Activated CD4-positive, alpha-beta T cell treated with anti-CD3 and anti-CD28 coated beads, Interleukin-2, amount 10 ng/mL, durations not matched to agents 7 days and 5 days (primary cell): ENCODE measurements at regions of chr1 and their contacts with region 1.

Region 1: DNA sequence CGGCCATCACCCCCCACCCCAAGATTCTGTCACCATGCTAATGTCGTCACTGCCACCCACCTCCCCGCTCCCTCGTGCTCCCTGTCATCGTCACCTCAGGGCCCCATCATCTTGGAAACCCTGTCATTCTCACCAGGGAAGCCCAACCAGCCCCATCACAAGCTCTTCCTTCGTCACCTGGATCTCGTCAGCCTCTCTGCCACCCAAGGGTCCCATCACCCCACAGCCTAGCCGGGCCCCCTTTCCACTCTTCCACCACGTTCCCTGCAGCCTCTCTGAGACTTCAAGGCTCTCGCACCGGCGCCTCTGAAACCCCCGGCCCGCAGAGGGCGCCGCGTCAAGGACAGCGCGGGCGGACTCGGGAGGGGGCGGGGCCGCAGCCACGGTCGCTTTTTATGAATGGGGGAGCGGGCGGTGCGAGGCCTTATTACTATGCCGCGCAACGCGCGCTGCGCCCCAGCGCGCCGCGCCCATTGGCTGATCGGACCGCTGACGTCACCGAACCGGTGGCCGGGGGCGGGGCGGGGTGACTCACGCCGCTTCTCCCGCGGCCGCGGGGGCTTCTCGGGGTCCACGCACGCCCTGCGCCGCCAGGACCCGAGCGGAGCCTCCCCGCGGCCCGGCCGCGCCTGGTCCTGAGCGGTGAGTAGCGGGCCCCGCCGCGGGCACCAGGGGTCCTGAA is at the start of gene GPR3:
- DNase-seq: peak; percentile 94
- H3K4me3 Mint-ChIP-seq: peak within 1 kb of the TSS; percentile 64
- H3K27ac Mint-ChIP-seq: peak within 1 kb of the TSS; percentile 87
- H3K4me1 Mint-ChIP-seq: peaks cover 15% of the 10 kb centered on the region
- H3K27me3 Mint-ChIP-seq: peaks cover 8% of the 10 kb centered on the region
- total RNA-seq, gene GPR3: 0.21 TPM in 1 of 2 experiments, not detected in the other

Region 2: GRCh38 chr1:27145934-27146354 is 246.3 kb before region 1 on chr1:
- CTCF ChIA-PET with region 1: no interaction called
- POLR2A ChIA-PET with region 1: no interaction called
- DNase-seq: no peak
- H3K4me3 Mint-ChIP-seq: no peak overlapping the region
- H3K27ac Mint-ChIP-seq: no peak overlapping the region
- H3K4me1 Mint-ChIP-seq: peaks cover 36% of the 10 kb centered on the region
- H3K27me3 Mint-ChIP-seq: no peaks in the 10 kb centered on the region

Region 3: DNA sequence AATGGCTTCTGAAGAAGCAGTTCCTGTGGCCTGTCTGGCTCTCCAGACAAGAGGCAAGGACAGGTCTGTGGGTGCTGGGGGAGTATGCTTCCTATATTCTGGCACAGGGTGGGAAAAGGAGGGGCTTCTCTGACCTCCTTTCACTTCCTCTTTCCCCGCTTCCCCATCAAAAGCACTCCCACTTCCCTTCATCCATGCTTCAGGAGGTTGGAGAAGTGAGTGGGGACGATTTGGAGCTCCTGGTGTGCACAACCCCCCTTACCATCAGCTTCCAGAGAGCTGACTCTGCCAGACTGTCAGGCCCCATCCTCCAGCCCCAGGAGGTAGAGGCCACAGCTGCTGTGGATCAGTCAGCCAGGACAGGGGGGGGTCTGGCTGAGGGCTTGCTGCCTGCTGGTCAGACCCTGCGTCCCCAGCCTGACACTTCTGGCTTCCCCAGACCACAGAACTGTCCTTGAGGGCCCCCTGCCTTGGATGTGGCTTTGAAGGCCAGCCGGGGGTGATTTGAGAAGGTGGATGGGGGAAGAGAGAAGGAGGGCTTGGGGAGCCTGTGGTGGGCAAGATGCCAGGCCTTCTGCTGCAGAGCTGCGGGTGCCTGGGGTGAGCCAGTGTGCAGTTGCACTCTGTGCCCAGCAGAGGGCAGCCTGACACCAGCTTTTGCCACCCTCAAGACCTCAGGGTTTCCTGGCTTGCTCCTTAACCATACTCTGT is 91.7 kb before region 1 on chr1:
- CTCF ChIA-PET with region 1: interaction called, 112 read pairs
- POLR2A ChIA-PET with region 1: no interaction called
- DNase-seq: peak; percentile 75
- H3K4me3 Mint-ChIP-seq: no peak overlapping the region
- H3K27ac Mint-ChIP-seq: no peak overlapping the region
- H3K4me1 Mint-ChIP-seq: peaks cover 5% of the 10 kb centered on the region
- H3K27me3 Mint-ChIP-seq: no peaks in the 10 kb centered on the region

Region 4: DNA sequence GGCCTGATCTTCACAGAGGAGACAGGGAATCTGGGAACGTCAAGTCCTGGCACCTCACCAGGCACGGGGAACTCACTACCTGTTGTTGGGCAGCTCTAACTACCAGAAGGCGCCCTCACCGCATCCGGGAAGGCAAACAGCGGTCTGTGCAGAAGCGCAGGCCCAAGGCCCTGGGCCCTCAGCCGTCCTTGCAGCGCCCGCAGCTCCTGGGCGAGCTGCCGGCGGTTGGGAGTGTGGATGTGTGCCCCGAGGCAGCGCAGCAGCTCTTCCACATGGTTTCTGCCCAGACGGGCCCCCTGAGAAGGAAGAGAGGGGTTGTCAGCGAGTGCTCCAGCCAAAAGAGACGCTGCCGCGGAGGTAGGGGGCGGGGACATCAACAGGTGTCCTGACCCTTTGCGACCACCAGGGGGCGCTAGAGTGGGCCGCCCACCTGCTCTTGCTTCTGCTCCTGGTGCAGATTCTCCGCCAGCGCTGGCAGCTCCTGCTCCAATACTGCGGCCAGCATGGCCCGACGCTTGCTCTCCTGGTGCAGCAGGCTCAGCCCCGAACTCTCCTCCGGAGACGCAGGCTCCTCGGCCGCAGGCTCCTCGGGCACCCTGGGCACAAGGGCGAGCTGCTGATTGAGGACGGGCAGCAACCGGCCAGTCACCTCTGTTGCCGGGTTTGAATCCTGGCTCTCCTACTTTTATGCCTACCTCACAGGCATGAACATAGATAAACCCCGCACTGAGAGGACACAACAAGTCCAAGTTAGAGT is 34.8 kb before region 1 on chr1:
- CTCF ChIA-PET with region 1: interaction called, 35 read pairs
- POLR2A ChIA-PET with region 1: no interaction called
- DNase-seq: peak; percentile 83
- H3K4me3 Mint-ChIP-seq: peak overlapping the region; percentile 72
- H3K27ac Mint-ChIP-seq: peak overlapping the region; percentile 93
- H3K4me1 Mint-ChIP-seq: peaks cover 43% of the 10 kb centered on the region
- H3K27me3 Mint-ChIP-seq: peaks cover 3% of the 10 kb centered on the region

Region 5: GRCh38 chr1:27365372-27366112 is 26.7 kb before region 1 on chr1:
- CTCF ChIA-PET with region 1: interaction called, 22 read pairs
- POLR2A ChIA-PET with region 1: no interaction called
- DNase-seq: peak; percentile 81
- H3K4me3 Mint-ChIP-seq: peak overlapping the region; percentile 77
- H3K27ac Mint-ChIP-seq: peak overlapping the region; percentile 82
- H3K4me1 Mint-ChIP-seq: peaks cover 50% of the 10 kb centered on the region
- H3K27me3 Mint-ChIP-seq: no peaks in the 10 kb centered on the region

Region 6: GRCh38 chr1:27416387-27417111 is 24.3 kb after region 1 on chr1:
- CTCF ChIA-PET with region 1: interaction called, 15 read pairs
- POLR2A ChIA-PET with region 1: no interaction called
- DNase-seq: peak; percentile 72
- H3K4me3 Mint-ChIP-seq: no peak overlapping the region
- H3K27ac Mint-ChIP-seq: no peak overlapping the region
- H3K4me1 Mint-ChIP-seq: peaks cover 31% of the 10 kb centered on the region
- H3K27me3 Mint-ChIP-seq: no peaks in the 10 kb centered on the region

Region 7: DNA sequence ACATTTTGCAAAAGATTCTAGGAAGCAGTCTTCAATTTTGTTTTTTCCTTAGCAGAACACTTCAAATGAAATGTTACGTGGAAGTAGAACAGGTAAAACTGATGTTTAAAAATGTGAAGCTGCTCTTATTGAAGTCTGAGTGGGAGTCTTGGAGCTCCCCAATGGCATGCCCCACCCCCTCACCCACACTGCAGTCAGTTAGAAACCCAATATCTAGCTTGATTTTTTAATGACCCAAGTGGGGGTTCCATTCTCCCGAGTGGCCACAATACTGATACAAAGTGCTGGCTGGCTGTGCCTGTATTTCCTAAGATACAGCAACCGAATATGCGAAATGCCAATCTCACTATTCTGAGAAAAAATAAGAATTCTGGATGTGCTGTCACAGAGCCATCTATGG is 31.5 kb after region 1 on chr1:
- CTCF ChIA-PET with region 1: interaction called, 14 read pairs
- POLR2A ChIA-PET with region 1: no interaction called
- DNase-seq: no peak
- H3K4me3 Mint-ChIP-seq: no peak overlapping the region
- H3K27ac Mint-ChIP-seq: no peak overlapping the region
- H3K4me1 Mint-ChIP-seq: peaks cover 53% of the 10 kb centered on the region
- H3K27me3 Mint-ChIP-seq: no peaks in the 10 kb centered on the region

Region 8: GRCh38 chr1:27522432-27523351 is 130.5 kb after region 1 on chr1:
- CTCF ChIA-PET with region 1: no interaction called
- POLR2A ChIA-PET with region 1: no interaction called
- DNase-seq: peak; percentile 81
- H3K4me3 Mint-ChIP-seq: peak overlapping the region; percentile 84
- H3K27ac Mint-ChIP-seq: peak overlapping the region; percentile 98
- H3K4me1 Mint-ChIP-seq: peaks cover 78% of the 10 kb centered on the region
- H3K27me3 Mint-ChIP-seq: no peaks in the 10 kb centered on the region